ENCODE measurements at regions of chr3 and their contacts with region 1.

Region 1: GRCh38 chr3:158644345-158644908 is at the start of gene GFM1:
- DNase-seq: peak; percentile 93 to 96
- ATAC-seq: peak; percentile 99
- H3K4me3 ChIP-seq: peak within 1 kb of the TSS; percentile 76
- H3K27ac ChIP-seq: peak within 1 kb of the TSS; percentile 91
- H3K4me1 ChIP-seq: peaks cover 19% of the 10 kb centered on the region
- H3K27me3 ChIP-seq: no peaks in the 10 kb centered on the region
- CTCF ChIP-seq: peak; percentile 84
- total RNA-seq, gene GFM1: 55.9 to 83.3 (median 69.2) TPM

Region 2: GRCh38 chr3:158352551-158352950 is 291.9 kb before region 1 on chr3:
- intact Hi-C with region 1: no loop called
- DNase-seq: no peak
- ATAC-seq: no peak
- H3K4me3 ChIP-seq: no peak overlapping the region
- H3K27ac ChIP-seq: no peak overlapping the region
- H3K4me1 ChIP-seq: peaks cover 6% of the 10 kb centered on the region
- H3K27me3 ChIP-seq: no peaks in the 10 kb centered on the region
- CTCF ChIP-seq: no peak

Region 3: GRCh38 chr3:158539414-158540014 is 104.9 kb before region 1 on chr3:
- intact Hi-C with region 1: loop called in 1 of 2 experiments (anchors 5 kb)
- DNase-seq: no peak
- ATAC-seq: peak in 1 of 4 donors; percentile 79
- H3K4me3 ChIP-seq: no peak overlapping the region
- H3K27ac ChIP-seq: no peak overlapping the region
- H3K4me1 ChIP-seq: no peaks in the 10 kb centered on the region
- H3K27me3 ChIP-seq: no peaks in the 10 kb centered on the region
- CTCF ChIP-seq: peak; percentile 63

Region 4: DNA sequence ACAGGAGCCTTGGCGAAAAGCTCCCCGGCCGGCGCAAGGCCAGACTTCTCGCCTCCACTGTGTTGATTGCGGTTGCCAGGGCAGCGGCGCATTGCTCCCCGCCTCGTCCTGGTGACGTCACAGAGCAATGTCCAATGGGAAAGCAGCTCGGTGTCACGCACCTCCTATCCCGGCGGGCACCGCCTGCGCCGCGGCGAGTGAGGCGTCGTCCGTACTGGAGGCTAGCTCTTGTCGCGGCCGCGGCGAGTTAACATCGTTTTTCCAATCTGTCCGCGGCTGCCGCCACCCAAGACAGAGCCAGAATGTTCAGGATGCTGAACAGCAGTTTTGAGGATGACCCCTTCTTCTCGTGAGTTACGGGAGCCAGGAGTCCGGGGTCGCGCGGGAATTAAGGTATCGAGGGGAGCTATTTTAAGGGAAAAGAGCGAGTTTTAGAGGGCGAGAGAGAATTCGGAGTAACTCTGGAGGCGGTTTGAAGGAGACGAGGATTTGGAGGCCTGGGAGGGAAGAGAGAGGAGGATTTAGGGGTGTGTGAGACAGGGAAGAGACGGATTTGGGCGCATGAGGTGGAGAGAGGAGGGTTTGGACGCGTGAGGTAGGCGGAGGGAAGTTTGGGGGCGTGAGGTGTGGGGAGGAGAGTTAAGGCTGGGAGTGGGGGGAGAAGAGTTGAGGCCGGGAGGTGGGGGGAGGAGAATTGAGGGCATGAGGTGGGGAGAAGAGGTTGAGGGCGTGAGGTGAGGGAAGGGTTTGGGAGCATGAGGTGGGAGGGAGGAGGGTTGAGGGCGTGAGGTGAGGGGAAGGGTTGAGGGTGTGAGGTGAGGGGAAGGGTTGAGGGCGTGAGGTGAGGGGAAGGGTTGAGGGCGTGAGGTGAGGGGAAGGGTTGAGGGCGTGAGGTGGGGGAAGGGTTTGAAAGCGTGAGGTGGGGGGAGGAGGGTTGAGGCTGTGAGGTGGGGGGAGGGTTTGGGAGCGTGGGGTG is 73.1 kb before region 1 on chr3 and contains the start of gene MLF1:
- intact Hi-C with region 1: loop called (anchors 5 kb)
- DNase-seq: peak; percentile 95 to 98
- ATAC-seq: peak; percentile 97 to 100 (median 99)
- H3K4me3 ChIP-seq: peak within 1 kb of the TSS; percentile 78
- H3K27ac ChIP-seq: peak within 1 kb of the TSS; percentile 86
- H3K4me1 ChIP-seq: peaks cover 16% of the 10 kb centered on the region
- H3K27me3 ChIP-seq: no peaks in the 10 kb centered on the region
- CTCF ChIP-seq: no peak
- total RNA-seq, gene MLF1: 15.4 to 37.4 (median 20.8) TPM

Measured in psoas muscle (tissue), 8 donors.